BJ (cell line): ENCODE measurements at regions of chr2 and their contacts with region 1.

Region 1: DNA sequence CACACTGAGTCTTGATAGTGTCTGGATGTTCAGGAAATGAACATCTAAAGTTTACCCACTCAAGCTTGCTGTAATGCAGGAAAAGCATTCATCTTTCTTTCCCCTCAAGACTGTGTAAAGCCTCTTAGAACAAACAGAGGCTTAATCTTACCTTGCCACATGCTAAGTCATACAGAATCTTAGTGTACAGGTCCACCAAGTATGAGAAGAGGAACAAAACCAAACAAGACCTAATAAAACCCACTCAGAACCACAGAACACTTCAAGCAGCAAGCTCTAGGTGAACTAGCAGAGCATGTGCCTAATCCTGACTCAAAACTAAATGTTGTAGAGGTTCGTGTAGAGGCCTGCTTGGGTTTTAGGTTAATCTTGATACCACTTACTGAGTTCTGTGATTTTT is 97.6 kb downstream of the SPTBN1 start:
- DNase-seq: no peak
- H3K4me3 ChIP-seq: no peak overlapping the region
- H3K27me3 ChIP-seq: no peaks in the 10 kb centered on the region
- CTCF ChIP-seq: no peak

Region 2: DNA sequence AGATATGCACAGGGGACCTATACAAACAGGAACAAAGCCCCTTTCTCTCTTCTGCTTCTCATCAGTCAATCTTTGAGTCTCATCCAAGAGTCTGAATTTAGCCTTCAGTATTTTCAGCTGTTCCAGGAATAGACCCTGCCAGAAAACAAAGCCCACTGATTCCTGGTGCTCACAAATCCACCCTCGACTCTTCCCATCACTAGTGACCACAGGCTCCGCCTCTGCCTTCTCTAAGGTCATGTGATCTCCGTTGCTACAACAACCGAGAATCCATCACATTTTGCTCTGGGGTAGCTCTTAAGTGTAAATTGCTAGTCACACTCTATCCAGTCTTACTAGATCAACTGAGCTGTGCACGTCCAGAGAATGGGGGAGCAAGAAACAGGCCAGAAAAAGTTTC is 144.0 kb before region 1 on chr2:
- CTCF ChIA-PET with region 1: no interaction called
- POLR2A ChIA-PET with region 1: no interaction called
- DNase-seq: no peak
- H3K4me3 ChIP-seq: no peak overlapping the region
- H3K27me3 ChIP-seq: no peaks in the 10 kb centered on the region; the same call in 1 of the 2 replicates
- CTCF ChIP-seq: no peak

Region 3: DNA sequence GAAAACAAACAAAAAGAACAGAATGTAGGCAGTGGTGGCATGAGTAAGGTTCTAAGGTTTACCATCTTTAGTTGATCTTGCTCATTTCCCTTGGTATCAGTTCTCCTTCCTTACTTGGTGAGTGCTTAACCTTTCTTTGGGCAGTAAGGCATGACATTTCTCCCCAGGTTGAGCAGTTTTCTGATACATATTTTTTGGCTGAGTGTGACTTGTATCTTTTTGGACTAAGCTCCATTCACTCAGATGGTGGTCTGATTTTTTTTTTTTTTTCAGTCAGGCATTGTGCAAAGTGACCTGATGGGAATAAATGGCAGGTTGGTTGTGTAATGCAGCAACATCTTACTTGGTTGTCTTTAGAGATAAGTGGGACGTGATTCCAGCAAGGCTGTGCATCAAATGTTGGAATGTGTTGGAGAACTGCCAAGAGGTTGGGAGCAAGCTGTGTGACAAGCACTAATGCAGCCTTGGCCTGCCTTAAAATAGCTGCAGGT is 82.5 kb before region 1 on chr2:
- CTCF ChIA-PET with region 1: no interaction called
- POLR2A ChIA-PET with region 1: interaction called, 10 read pairs
- DNase-seq: peak; percentile 37
- H3K4me3 ChIP-seq: no peak overlapping the region
- H3K27me3 ChIP-seq: no peaks in the 10 kb centered on the region
- CTCF ChIP-seq: no peak